Sigmoid colon (tissue), 7 donors: ENCODE measurements at regions of chr3 and their contacts with region 1.

Region 1: GRCh38 chr3:141011232-141011996 is 39.7 kb upstream of the SPSB4 start:
- DNase-seq: peak; percentile 88
- H3K4me3 ChIP-seq: no peak overlapping the region
- H3K27ac ChIP-seq: no peak overlapping the region
- H3K4me1 ChIP-seq: no peaks in the 10 kb centered on the region
- H3K27me3 ChIP-seq: no peaks in the 10 kb centered on the region
- CTCF ChIP-seq: peak; percentile 51 to 77 (median 62)
- EP300 ChIP-seq: no peak
- POLR2A ChIP-seq: no peak

Region 2: DNA sequence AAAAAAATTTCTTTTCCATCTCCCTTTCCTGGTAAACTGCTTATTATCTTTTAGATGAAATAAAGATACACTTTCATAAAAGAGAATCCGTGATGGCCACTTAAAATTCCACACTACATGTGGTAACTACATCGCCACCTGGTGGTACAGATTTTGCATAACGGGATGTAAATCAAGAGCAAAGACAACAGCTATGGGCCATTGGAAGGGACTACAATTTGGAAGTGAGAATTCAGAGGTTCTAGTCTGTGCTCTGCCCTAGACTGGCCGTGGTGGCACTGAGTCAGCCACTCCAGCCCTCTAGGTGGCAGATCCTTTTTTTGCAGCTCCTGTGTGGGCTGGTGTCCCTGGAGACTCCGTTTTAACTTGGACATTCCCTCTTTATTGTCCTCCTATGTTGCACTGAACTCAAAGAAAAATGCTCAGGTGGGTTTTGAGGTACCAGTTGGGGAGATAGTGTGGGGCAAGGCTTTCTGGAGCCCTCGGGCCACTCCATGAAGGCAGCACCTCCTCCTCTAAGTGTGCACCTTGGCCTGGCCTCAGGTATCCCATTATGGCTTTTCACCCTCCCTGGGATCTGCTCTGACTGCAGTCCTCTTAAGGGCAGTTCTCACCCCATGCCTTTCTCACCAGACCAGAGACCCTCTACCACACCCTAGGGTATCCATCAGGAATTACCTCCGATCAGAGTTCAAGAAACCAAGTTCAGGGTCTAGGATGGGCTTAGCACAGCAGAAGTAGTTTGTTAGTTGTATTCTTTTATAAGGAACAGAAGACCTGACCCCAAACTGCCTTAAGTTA is 94.6 kb after region 1 on chr3:
- intact Hi-C with region 1: loop called (anchors 2 kb)
- DNase-seq: peak; percentile 88
- H3K4me3 ChIP-seq: no peak overlapping the region
- H3K27ac ChIP-seq: no peak overlapping the region
- H3K4me1 ChIP-seq: no peaks in the 10 kb centered on the region
- H3K27me3 ChIP-seq: no peaks in the 10 kb centered on the region
- CTCF ChIP-seq: peak; percentile 38 to 72 (median 67)
- EP300 ChIP-seq: no peak
- POLR2A ChIP-seq: no peak

Region 3: GRCh38 chr3:141192345-141192744 is 180.9 kb after region 1 on chr3:
- intact Hi-C with region 1: loop called (anchors 2 kb)
- DNase-seq: peak; percentile 98
- H3K4me3 ChIP-seq: no peak overlapping the region
- H3K27ac ChIP-seq: no peak overlapping the region
- H3K4me1 ChIP-seq: peaks cover 0 to 4% (median 0%) of the 10 kb centered on the region in 4 donors
- H3K27me3 ChIP-seq: no peaks in the 10 kb centered on the region
- CTCF ChIP-seq: peak; percentile 98 to 99 (median 98)
- EP300 ChIP-seq: no peak
- POLR2A ChIP-seq: no peak

Region 4: GRCh38 chr3:141632779-141633374 is 621.5 kb after region 1 on chr3:
- intact Hi-C with region 1: no loop called
- DNase-seq: no peak
- H3K4me3 ChIP-seq: no peak overlapping the region
- H3K27ac ChIP-seq: no peak overlapping the region
- H3K4me1 ChIP-seq: no peaks in the 10 kb centered on the region
- H3K27me3 ChIP-seq: no peaks in the 10 kb centered on the region
- CTCF ChIP-seq: no peak
- EP300 ChIP-seq: no peak
- POLR2A ChIP-seq: no peak